Activated B cell treated with CpG ODN at 0.5 μM for 24 hours (primary cell): ENCODE measurements at regions of chr11 and their contacts with region 1.

Region 1: DNA sequence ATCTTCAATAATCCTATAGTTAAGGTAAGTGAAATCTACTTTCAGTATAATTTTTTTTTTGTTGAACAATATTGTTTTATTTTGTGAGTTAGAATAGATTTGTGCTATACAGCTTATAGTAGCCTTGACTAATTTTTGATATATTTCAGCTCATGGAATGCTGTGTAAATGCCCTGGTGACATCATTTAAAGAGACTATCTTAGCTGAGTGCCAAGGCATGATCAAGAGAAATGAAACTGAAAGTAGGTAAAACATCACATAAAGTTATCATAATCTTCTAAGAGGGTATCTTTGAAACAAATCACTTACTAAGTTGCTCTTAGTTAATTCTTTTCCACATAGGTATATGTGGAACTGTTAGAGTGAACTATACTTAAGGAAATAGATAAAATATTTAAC is 51.4 kb upstream of the ACAT1 start:
- DNase-seq: no peak
- ATAC-seq: no peak
- H3K4me3 Mint-ChIP-seq: no peak overlapping the region
- H3K27ac Mint-ChIP-seq: no peak overlapping the region
- H3K4me1 Mint-ChIP-seq: peaks cover 10% of the 10 kb centered on the region
- H3K27me3 Mint-ChIP-seq: no peaks in the 10 kb centered on the region
- CTCF ChIP-seq: no peak

Region 2: DNA sequence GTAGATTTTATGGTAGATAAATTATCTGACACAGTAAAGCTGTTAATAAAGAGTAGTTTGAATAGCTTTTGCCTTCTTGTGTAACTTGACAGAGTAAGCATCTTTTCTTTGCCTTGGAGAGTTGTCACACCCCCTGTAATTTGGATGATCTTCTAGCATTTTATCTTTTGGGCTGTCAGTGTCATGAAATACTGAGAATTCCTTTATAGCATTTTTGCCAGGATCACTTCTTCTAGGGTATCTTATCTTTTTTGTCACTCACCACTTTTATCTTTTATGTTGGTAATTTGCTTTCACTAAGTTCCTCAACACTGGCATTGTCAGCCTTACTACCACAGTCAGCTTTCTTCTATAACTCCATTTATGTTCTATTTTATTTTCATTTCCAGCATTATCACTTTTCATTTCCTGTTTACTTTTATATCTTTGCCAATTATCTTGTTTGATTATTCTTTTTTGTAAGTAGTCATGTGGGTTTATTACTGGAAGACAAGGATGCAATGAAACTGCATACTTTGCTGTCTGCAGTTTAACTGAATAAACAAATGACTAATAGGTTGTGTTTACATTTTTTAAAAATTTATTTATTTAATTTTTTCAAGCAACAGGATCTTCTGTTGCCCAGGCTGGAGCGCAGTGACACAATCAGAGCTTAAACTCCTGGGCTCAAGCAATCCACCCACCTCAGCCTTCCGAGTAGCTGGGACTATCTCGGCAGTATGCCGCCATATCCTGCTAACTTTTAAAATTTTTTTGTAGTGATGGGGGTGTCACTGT is 23.4 kb after region 1 on chr11:
- CTCF ChIA-PET with region 1: no interaction called
- POLR2A ChIA-PET with region 1: no interaction called
- intact Hi-C with region 1: loop called (anchors 1 kb)
- DNase-seq: no peak
- ATAC-seq: no peak
- H3K4me3 Mint-ChIP-seq: no peak overlapping the region
- H3K27ac Mint-ChIP-seq: no peak overlapping the region
- H3K4me1 Mint-ChIP-seq: no peaks in the 10 kb centered on the region
- H3K27me3 Mint-ChIP-seq: no peaks in the 10 kb centered on the region
- CTCF ChIP-seq: no peak